ENCODE measurements at regions of chrX and their contacts with region 1.

Region 1: GRCh38 chrX:153857348-153857903 is 27.1 kb upstream of the PDZD4 start:
- DNase-seq: no peak
- ATAC-seq: no peak
- H3K4me3 ChIP-seq: no peak overlapping the region
- H3K4me3 Mint-ChIP-seq: no peak overlapping the region
- H3K27ac ChIP-seq: no peak overlapping the region
- H3K27ac Mint-ChIP-seq: no peak overlapping the region
- H3K4me1 ChIP-seq: peaks cover 14% of the 10 kb centered on the region
- H3K4me1 Mint-ChIP-seq: peaks cover 4% of the 10 kb centered on the region
- H3K27me3 ChIP-seq: peaks cover 0 to 5% of the 10 kb centered on the region in 2 experiments
- H3K27me3 Mint-ChIP-seq: no peaks in the 10 kb centered on the region
- CTCF ChIP-seq: no peak

Region 2: DNA sequence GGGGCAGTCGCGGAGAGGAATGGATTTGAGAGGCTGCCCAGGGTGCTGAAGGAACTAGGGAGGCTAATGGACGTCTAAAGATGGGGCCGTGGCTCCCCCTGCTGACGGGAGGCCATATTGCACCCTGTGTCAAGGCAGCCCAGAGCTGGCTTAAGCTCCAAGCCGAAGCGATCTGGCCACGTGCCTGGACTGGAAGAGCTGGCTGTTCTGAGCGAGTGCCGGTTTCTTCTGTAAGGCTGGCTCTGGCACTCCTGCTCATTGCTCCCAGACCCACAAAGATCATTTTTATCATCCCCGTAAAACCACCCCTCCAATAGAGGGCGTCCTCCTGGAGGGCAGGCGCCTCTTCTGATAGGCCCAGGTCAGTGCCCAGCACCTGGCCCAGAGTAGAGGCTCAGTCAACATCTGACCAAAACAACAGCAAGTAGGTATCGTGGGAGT is 189.4 kb before region 1 on chrX:
- CTCF ChIA-PET with region 1: no interaction called
- POLR2A ChIA-PET with region 1: no interaction called
- intact Hi-C with region 1: no loop called
- DNase-seq: peak; percentile 55 to 85 (median 72)
- ATAC-seq: peak; percentile 90
- H3K4me3 ChIP-seq: peak overlapping the region; percentile 14
- H3K4me3 Mint-ChIP-seq: peak overlapping the region; percentile 54
- H3K27ac ChIP-seq: no peak overlapping the region
- H3K27ac Mint-ChIP-seq: no peak overlapping the region
- H3K4me1 ChIP-seq: peaks cover 15% of the 10 kb centered on the region
- H3K4me1 Mint-ChIP-seq: peaks cover 7% of the 10 kb centered on the region
- H3K27me3 ChIP-seq: peaks cover 0 to 2% of the 10 kb centered on the region in 2 experiments
- H3K27me3 Mint-ChIP-seq: peaks cover 8% of the 10 kb centered on the region
- CTCF ChIP-seq: peak; percentile 45

Region 3: GRCh38 chrX:153800177-153800722 is 57.2 kb before region 1 on chrX:
- CTCF ChIA-PET with region 1: no interaction called
- POLR2A ChIA-PET with region 1: interaction called, 3 read pairs
- intact Hi-C with region 1: loop called in 1 of 2 experiments (anchors 10 kb)
- DNase-seq: no peak
- ATAC-seq: no peak
- H3K4me3 ChIP-seq: no peak overlapping the region
- H3K4me3 Mint-ChIP-seq: no peak overlapping the region
- H3K27ac ChIP-seq: no peak overlapping the region
- H3K27ac Mint-ChIP-seq: no peak overlapping the region
- H3K4me1 ChIP-seq: peaks cover 16% of the 10 kb centered on the region
- H3K4me1 Mint-ChIP-seq: peaks cover 6% of the 10 kb centered on the region
- H3K27me3 ChIP-seq: no peaks in the 10 kb centered on the region
- H3K27me3 Mint-ChIP-seq: no peaks in the 10 kb centered on the region
- CTCF ChIP-seq: no peak

Region 4: GRCh38 chrX:153845842-153846241 is 11.6 kb before region 1 on chrX:
- CTCF ChIA-PET with region 1: no interaction called
- POLR2A ChIA-PET with region 1: no interaction called
- intact Hi-C with region 1: no loop called
- DNase-seq: no peak
- ATAC-seq: no peak
- H3K4me3 ChIP-seq: no peak overlapping the region
- H3K4me3 Mint-ChIP-seq: no peak overlapping the region
- H3K27ac ChIP-seq: no peak overlapping the region
- H3K27ac Mint-ChIP-seq: no peak overlapping the region
- H3K4me1 ChIP-seq: no peaks in the 10 kb centered on the region
- H3K4me1 Mint-ChIP-seq: no peaks in the 10 kb centered on the region
- H3K27me3 ChIP-seq: no peaks in the 10 kb centered on the region
- H3K27me3 Mint-ChIP-seq: peaks cover 6% of the 10 kb centered on the region
- CTCF ChIP-seq: no peak

Measured in CD4-positive, alpha-beta T cell (primary cell).